ENCODE measurements at regions of chr5 and their contacts with region 1.

Region 1: GRCh38 chr5:145846081-145846480 is 10.9 kb upstream of the PRELID2 start:
- DNase-seq: no peak

Region 2: GRCh38 chr5:145791866-145792265 is 54.2 kb before region 1 on chr5:
- CTCF ChIA-PET with region 1: no interaction called
- POLR2A ChIA-PET with region 1: no interaction called
- DNase-seq: no peak

Region 3: DNA sequence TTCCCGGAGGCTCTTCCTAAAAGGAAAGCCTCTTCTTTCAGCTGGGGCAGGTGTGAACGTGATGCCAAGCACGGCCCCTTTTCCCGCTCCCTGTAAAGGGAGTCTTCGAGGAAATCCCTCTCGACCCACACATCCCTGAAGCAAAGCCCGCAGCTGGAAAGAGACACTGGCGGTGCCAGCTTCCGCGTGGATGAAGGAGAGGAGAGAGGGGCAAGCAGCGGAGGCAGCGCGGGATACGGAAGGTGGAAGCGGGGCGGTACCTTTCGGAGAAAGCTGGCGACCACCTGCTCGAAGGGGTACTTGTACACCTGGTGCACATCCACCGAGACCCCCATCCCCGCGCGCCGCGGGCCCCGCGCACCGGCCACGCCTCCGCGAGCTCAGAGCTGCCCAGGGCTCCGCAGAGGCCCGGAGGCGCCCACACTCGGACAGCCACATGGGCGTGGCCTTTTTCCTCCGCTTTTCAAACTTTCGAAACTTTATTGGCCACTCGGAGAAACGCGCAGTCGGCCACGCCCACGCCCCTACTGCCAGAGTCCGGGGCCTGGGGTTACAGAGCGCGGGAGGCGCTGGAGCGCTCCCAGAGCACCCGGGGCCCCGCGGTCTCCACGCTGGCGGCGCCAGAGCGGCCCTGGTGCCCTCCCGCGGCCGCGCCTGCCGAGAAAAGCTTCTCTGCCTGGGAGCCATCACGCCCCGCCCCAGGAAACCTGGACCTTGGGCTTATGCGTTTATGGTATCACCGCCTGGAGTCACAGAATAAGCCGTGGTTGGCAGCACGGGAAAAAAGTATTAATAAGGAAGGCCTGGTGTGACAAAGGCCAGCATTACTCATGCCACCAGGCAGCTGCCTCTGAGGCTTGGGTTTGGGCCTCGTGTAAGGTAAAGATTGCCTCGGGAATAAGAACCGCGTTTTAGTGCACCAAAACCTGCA is 10.9 kb before region 1 on chr5 and contains the start of gene PRELID2:
- CTCF ChIA-PET with region 1: interaction called, 5 read pairs
- POLR2A ChIA-PET with region 1: interaction called, 18 read pairs
- DNase-seq: peak; percentile 83

Region 4: GRCh38 chr5:146068977-146069779 is 223.1 kb after region 1 on chr5:
- CTCF ChIA-PET with region 1: no interaction called
- POLR2A ChIA-PET with region 1: no interaction called
- DNase-seq: no peak